GM10248 (cell line): ENCODE measurements at regions of chr1 and their contacts with region 1.

Region 1: DNA sequence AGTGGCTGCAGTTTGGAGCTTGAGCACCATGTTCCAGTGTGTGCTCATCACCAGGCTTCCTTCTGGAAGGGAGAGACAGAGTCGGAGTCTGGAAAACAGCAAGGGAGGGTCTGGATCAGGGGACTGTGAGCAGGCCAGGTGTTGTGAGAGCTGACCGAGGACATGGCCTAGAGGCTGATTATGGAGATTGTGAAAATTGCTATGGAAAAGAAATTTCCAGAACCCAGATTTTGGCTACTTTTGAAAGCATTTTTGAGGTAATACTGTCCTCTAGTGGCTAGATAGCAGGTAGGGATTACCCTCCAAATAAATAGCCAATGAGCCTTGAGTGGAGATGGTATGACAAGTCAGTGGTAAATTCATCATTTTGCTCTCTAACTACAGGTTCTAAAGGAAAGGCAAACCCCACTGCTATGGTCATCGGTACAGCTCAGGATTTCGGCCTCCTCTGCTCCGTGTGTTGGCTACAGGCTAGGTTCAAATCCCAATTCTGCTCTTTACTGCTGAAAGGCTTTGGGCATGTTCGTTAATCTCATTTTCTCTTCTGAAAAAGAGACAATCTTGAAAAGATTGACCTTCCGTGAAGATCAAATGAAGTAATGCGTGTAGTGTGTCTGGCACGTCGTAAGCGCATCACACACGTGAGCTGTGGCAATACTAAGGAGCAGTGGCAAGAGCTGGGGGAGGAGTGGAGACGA is 1.0 kb upstream of the HAO2 start:
- DNase-seq: peak; percentile 52
- CTCF ChIP-seq: peak; percentile 74

Region 2: DNA sequence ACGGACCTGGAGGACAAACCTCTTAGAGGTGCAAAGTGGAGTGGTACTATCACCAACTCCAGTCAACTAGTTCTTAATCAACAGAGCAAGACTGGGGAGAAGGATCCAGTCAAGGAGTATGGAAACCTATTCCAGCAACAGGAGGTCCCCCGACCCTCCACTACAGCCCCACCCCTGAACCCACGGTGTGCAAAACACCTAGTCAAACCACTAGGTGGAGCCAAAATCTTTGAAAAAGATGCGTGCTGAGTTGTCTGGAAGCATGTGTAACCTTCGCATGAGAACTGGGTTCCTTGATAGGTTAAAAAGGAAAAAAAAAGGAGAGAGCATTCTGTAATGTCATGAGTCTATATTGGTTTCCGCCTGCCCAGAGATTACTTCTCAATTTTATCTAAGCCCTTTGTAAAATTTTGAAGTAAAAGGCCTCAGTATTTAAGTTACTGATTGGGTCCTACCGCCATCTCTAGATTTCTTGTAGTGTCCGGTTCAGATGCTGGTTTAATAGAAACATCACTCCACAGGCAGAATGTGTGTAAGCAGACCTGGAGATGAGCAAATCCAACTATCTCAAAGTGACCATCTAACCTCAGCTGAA is 80.9 kb before region 1 on chr1:
- CTCF ChIA-PET with region 1: interaction called, 49 read pairs
- POLR2A ChIA-PET with region 1: no interaction called
- DNase-seq: peak; percentile 51
- CTCF ChIP-seq: peak; percentile 74

Region 3: DNA sequence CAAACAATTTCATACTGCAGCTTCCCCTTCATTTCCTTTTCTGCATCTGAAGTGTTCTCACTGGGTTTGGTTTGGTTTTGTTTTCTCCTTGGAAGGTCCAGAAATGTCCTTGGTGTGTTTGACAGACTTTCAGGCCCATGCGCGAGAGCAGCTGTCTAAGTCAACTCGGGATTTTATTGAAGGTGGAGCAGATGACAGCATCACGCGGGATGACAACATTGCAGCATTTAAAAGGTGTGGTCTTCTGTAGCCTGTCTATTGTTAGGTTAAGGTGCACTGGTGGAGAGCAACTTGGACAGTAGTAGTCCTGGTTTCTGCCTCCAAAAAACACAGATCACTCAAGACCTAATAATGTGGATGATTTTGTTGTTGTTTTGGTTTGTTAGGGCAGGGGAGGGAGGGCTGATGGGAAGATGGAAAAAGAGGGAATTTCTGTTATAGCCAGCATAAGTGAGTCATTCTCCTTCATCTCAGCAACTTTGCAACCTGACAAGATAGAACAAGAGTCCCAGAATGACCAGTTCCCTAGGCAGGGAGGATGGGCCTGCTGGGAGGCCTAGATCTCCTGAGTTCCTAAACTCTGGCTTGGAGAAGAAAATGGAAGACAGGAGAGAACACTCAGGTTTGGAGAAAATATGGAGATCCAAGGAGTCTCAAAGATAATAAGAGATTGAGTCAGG is 13.5 kb after region 1 on chr1:
- CTCF ChIA-PET with region 1: interaction called, 10 read pairs
- POLR2A ChIA-PET with region 1: no interaction called
- DNase-seq: no peak
- CTCF ChIP-seq: no peak